ENCODE measurements at regions of chr11 and their contacts with region 1.

Region 1: GRCh38 chr11:121451986-121452608 is at the start of gene SORL1:
- DNase-seq: peak; percentile 55
- ATAC-seq: peak; percentile 99
- H3K4me3 ChIP-seq: peak within 1 kb of the TSS; percentile 92
- H3K27ac ChIP-seq: peak within 1 kb of the TSS; percentile 31; the same call in 1 of the 2 replicates
- H3K4me1 ChIP-seq: no peaks in the 10 kb centered on the region
- H3K27me3 ChIP-seq: peaks cover 48% of the 10 kb centered on the region
- CTCF ChIP-seq: peak; percentile 66
- POLR2A ChIP-seq: no peak
- RAD21 ChIP-seq: peak; percentile 56
- total RNA-seq, gene SORL1: 1.9 and 2.0 TPM in 2 replicates

Region 2: DNA sequence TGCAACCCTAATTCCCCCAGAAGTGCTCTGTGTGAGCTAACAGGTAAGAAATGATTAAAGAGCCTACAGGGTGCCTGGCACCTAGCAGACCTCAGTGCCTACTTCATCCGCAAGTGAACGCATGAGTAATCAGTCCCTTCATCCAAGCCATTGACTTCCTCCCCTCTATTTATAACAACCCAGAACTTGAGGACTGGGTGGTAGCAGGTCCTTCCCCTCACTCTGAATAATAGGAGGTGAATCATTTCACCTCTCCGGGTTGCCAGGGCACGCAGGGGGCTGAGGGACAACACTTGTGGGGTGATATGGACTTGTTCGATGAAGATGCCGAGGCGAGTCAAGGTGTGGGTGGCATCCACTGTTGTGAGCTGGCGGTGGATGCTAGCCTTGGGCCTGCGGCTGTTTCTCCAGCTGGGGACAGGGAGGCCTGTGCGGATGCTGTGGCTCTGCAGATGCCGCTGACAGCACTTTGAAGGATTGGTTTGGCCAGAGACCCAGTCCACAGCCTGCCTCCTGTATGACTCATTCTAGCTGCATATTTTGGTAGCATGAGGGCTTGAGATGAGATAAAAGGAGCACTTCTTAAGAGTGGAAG is 12.4 kb after region 1 on chr11:
- CTCF ChIA-PET with region 1: interaction called, 4 read pairs
- POLR2A ChIA-PET with region 1: interaction called, 18 read pairs
- dilution Hi-C with region 1: no loop called
- in situ Hi-C with region 1: no loop called
- intact Hi-C with region 1: no loop called
- DNase-seq: peak; percentile 94
- ATAC-seq: peak; percentile 81
- H3K4me3 ChIP-seq: no peak overlapping the region
- H3K27ac ChIP-seq: peak overlapping the region; percentile 4; the same call in 1 of the 2 replicates
- H3K4me1 ChIP-seq: peaks cover 17% of the 10 kb centered on the region
- H3K27me3 ChIP-seq: peaks cover 2% of the 10 kb centered on the region; the same call in 1 of the 2 replicates
- CTCF ChIP-seq: no peak
- POLR2A ChIP-seq: no peak
- RAD21 ChIP-seq: no peak

Region 3: DNA sequence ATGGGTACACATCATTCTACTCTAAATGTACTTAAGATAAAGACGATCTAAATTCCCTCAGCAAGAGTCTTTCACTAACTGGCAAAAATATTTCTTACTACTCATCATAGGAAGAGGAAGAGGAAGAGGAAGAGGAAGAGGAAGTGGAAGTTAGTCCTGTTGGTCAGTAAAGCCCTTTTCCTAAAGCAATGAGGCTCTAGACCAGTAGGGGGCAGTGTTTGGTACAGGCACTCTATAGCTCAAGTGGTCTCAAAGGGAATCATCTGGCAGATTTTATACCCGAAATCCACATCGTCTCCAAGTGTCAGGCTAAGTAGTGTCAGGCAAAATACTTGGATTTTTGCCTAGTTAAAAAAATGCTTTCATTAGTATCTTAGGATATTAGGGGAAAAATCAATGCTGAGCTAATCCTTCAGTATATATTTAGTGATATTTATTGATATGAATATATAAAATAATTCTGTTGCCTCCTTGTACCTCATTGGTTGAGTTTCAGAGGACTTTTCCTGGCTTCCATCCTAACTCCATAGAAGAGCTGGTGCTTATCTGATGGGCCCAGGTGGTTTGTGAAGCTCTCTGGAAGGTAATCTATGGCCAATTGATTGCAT is 656.2 kb after region 1 on chr11:
- CTCF ChIA-PET with region 1: no interaction called
- POLR2A ChIA-PET with region 1: no interaction called
- dilution Hi-C with region 1: no loop called
- in situ Hi-C with region 1: loop called (anchors 25 kb)
- intact Hi-C with region 1: no loop called
- DNase-seq: peak; percentile 70
- ATAC-seq: no peak
- H3K4me3 ChIP-seq: no peak overlapping the region
- H3K27ac ChIP-seq: no peak overlapping the region
- H3K4me1 ChIP-seq: peaks cover 25% of the 10 kb centered on the region
- H3K27me3 ChIP-seq: no peaks in the 10 kb centered on the region
- CTCF ChIP-seq: peak; percentile 62
- POLR2A ChIP-seq: no peak
- RAD21 ChIP-seq: peak; percentile 39